ENCODE measurements at regions of chr5 and their contacts with region 1.

Region 1: DNA sequence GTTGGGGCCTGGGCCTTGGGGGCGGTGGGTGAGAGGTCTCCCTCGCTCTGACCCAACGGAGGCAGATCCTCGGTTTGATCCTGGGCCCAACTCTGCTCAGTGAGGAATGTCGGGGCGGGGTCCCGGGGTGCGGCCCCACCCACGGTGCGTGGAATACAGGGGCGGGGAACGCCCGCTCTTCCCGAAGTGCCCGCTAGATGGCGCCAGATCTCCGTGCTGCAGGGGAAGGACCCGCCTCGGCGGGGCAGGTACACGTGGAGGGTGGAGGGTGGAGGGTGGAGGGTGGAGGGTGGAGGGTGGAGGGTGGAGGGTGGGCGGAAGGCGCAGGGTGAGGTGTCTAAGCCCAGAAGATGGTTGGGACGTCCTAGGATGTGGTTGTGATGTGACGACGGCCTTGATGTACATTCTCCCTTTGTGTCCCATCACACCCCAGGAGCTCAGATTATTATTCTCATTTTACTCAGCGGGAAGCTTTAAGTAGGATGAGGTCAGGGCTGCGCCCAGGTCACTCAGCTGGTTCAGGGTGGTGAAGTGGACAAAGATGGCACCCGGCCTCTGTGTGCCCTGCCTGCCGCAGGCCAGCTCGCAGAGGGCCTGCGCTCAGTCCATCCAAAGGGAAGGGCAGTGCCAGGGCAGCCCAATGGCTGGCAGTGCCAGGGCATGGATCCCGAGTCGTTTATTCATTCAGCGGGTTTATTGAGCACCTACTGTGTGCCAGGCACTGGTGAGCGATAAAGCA is 9.4 kb upstream of the RPS14 start:
- DNase-seq: peak; percentile 77 to 87
- ATAC-seq: peak; percentile 92 to 97 (median 94)
- H3K4me3 ChIP-seq: peak overlapping the region in 5 of 10 donors; percentile 18 to 40 (median 32)
- H3K27ac ChIP-seq: peak overlapping the region in 5 of 10 donors; percentile 16 to 65 (median 27)
- H3K4me1 ChIP-seq: peaks cover 0 to 33% (median 13%) of the 10 kb centered on the region in 9 donors
- H3K27me3 ChIP-seq: no peaks in the 10 kb centered on the region
- CTCF ChIP-seq: peak; percentile 78 to 89 (median 85)

Region 2: GRCh38 chr5:150486402-150487198 is 27.6 kb after region 1 on chr5:
- intact Hi-C with region 1: loop called in 1 of 10 experiments (anchors 1 kb)
- DNase-seq: peak; percentile 56 to 67
- ATAC-seq: peak; percentile 20 to 53 (median 36)
- H3K4me3 ChIP-seq: peak overlapping the region; percentile 69 to 99 (median 94)
- H3K27ac ChIP-seq: peak overlapping the region; percentile 90 to 99 (median 96)
- H3K4me1 ChIP-seq: peaks cover 36 to 58% (median 54%) of the 10 kb centered on the region in 9 donors
- H3K27me3 ChIP-seq: no peaks in the 10 kb centered on the region
- CTCF ChIP-seq: peak in 1 of 9 donors; percentile 13

Region 3: DNA sequence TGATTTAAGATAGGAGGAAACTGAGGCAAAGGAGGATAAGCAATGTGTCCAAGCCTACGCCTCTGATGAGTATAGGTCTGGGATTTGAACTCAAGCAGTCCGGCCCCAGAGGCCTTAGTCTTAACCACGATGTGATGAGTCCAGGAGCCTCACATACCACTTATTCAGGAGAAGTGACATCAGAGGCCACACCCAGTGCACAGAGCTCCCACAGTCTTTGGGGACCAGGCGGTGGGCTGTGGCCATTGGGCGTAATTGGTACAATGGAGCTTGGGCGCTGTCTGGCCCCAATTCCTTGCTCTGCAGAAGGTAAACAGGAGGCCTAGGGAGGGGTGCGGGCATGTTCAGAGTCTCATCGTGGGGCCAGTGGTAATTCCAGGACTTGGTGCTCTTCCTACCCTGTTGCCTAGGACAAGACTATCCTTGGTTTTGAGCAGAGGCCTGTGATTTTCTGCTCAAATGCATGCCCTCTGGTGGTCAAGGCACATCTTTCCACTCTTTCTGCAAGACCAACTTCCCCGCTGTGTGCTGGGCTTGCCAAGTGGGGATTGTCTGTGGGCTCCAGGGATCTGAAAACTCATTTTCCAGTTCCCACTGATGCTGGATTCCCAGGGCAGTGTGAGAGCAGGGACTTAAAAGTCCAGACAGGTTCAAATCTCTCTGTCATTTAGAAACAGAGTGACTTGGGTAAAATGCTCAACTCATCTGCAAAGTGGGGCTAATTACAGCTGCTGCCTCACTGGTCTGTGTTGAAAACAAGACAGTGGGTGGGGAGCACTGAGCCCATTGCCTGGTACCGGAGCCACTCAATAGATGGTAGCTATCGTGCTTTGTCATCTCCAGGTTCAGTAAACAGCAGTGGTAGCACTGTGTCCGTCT is 64.7 kb after region 1 on chr5:
- intact Hi-C with region 1: loop called in 9 of 10 experiments (anchors 2 to 10 kb)
- DNase-seq: peak in 1 of 2 donors; percentile 58
- ATAC-seq: peak; percentile 27 to 78 (median 62)
- H3K4me3 ChIP-seq: no peak overlapping the region
- H3K27ac ChIP-seq: peak overlapping the region; percentile 27 to 90 (median 74)
- H3K4me1 ChIP-seq: peaks cover 31 to 91% (median 67%) of the 10 kb centered on the region in 9 donors
- H3K27me3 ChIP-seq: no peaks in the 10 kb centered on the region
- CTCF ChIP-seq: peak; percentile 39 to 80 (median 68)

Region 4: GRCh38 chr5:150544611-150545219 is 85.7 kb after region 1 on chr5:
- intact Hi-C with region 1: loop called (anchors 1 to 5 kb)
- DNase-seq: peak; percentile 78 to 80
- ATAC-seq: peak; percentile 69 to 81 (median 77)
- H3K4me3 ChIP-seq: no peak overlapping the region
- H3K27ac ChIP-seq: peak overlapping the region in 2 of 10 donors; percentile 12 to 48
- H3K4me1 ChIP-seq: peaks cover 0 to 46% (median 32%) of the 10 kb centered on the region in 9 donors
- H3K27me3 ChIP-seq: no peaks in the 10 kb centered on the region
- CTCF ChIP-seq: peak; percentile 71 to 95 (median 89)

Region 5: GRCh38 chr5:150694612-150695011 is 235.6 kb after region 1 on chr5:
- intact Hi-C with region 1: loop called in 2 of 10 experiments (anchors 10 kb)
- DNase-seq: no peak
- ATAC-seq: no peak
- H3K4me3 ChIP-seq: no peak overlapping the region
- H3K27ac ChIP-seq: no peak overlapping the region
- H3K4me1 ChIP-seq: peaks cover 0 to 13% (median 10%) of the 10 kb centered on the region in 9 donors
- H3K27me3 ChIP-seq: no peaks in the 10 kb centered on the region
- CTCF ChIP-seq: no peak

Region 6: DNA sequence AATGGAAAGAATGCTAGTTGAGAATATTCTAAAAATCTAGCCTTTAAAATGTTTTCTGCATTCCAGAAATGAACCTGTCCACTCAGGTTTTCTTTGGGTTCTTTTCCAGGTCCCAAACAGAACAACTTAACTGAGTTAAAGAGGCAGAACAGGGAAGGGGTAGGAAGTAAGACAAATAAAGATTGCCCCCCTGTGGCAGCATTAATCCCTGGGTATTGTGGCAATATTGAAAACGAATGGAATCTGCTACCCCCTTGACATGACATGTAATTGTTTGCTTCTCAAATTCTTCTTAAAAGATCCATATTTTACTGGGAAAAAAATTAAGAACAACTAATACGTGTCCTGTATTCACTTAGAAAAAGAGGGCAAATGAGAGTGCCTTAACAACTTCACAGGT is 251.2 kb after region 1 on chr5:
- intact Hi-C with region 1: loop called in 1 of 10 experiments (anchors 5 kb)
- DNase-seq: no peak
- ATAC-seq: no peak
- H3K4me3 ChIP-seq: no peak overlapping the region
- H3K27ac ChIP-seq: no peak overlapping the region
- H3K4me1 ChIP-seq: peaks cover 0 to 9% (median 0%) of the 10 kb centered on the region in 9 donors
- H3K27me3 ChIP-seq: no peaks in the 10 kb centered on the region
- CTCF ChIP-seq: peak; percentile 9 to 55 (median 40)

Region 7: GRCh38 chr5:150846654-150847333 is 387.8 kb after region 1 on chr5:
- intact Hi-C with region 1: loop called in 5 of 10 experiments (anchors 5 to 10 kb)
- DNase-seq: peak in 1 of 2 donors; percentile 71
- ATAC-seq: peak; percentile 81 to 94 (median 92)
- H3K4me3 ChIP-seq: peak overlapping the region in 1 of 10 donors; percentile 28
- H3K27ac ChIP-seq: no peak overlapping the region
- H3K4me1 ChIP-seq: peaks cover 0 to 5% (median 0%) of the 10 kb centered on the region in 9 donors
- H3K27me3 ChIP-seq: no peaks in the 10 kb centered on the region
- CTCF ChIP-seq: peak; percentile 37 to 81 (median 71)

Measured in heart right ventricle (tissue), 16 donors.